Gastrocnemius medialis (tissue), 4 donors: ENCODE measurements at regions of chr18 and their contacts with region 1.

Region 1: GRCh38 chr18:34639687-34640086 is 70.4 kb upstream of the DTNA start:
- DNase-seq: peak in 1 of 2 donors; percentile 31
- ATAC-seq: peak; percentile 74 to 75
- H3K4me3 ChIP-seq: no peak overlapping the region
- H3K27ac ChIP-seq: peak overlapping the region; percentile 57 to 86 (median 72)
- H3K4me1 ChIP-seq: peaks cover 35 to 43% of the 10 kb centered on the region in 2 donors
- H3K27me3 ChIP-seq: no peaks in the 10 kb centered on the region
- CTCF ChIP-seq: no peak
- POLR2A ChIP-seq: no peak

Region 2: DNA sequence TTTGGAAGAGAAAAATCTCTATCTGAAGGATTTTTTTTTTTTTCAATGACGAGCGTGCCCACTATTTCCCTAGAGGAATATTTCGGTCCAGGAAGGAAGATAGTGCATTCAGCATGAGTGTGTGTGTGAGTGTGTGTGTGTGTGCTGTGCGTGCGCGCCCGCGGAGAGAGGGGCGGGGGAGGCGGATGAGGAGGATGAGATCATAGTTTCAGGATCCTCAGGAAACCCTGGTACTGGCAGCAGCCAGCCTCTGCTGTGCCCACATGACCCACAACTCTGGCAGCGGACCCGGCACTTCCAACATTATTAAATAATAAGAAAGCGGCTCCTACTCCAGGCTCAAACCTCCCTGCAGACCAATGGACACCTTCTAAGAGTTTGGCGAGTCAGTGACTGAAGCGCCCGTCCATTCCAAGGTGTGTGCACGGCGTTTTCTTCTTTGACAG is 146.6 kb before region 1 on chr18:
- in situ Hi-C with region 1: no loop called
- intact Hi-C with region 1: loop called (anchors 5 kb)
- DNase-seq: peak; percentile 63 to 85
- ATAC-seq: peak; percentile 87 to 88
- H3K4me3 ChIP-seq: peak overlapping the region; percentile 69 to 79 (median 72)
- H3K27ac ChIP-seq: peak overlapping the region; percentile 82 to 94 (median 92)
- H3K4me1 ChIP-seq: peaks cover 19 to 20% of the 10 kb centered on the region in 2 donors
- H3K27me3 ChIP-seq: no peaks in the 10 kb centered on the region
- CTCF ChIP-seq: no peak
- POLR2A ChIP-seq: no peak

Region 3: GRCh38 chr18:34624551-34624950 is 15.1 kb before region 1 on chr18:
- in situ Hi-C with region 1: no loop called
- intact Hi-C with region 1: loop called (anchors 2 kb)
- DNase-seq: no peak
- ATAC-seq: no peak
- H3K4me3 ChIP-seq: no peak overlapping the region
- H3K27ac ChIP-seq: peak overlapping the region; percentile 10 to 70 (median 54)
- H3K4me1 ChIP-seq: peaks cover 19 to 36% of the 10 kb centered on the region in 2 donors
- H3K27me3 ChIP-seq: no peaks in the 10 kb centered on the region
- CTCF ChIP-seq: no peak
- POLR2A ChIP-seq: no peak

Region 4: GRCh38 chr18:34676816-34677574 is 37.3 kb after region 1 on chr18:
- in situ Hi-C with region 1: no loop called
- intact Hi-C with region 1: no loop called
- DNase-seq: no peak
- ATAC-seq: no peak
- H3K4me3 ChIP-seq: no peak overlapping the region
- H3K27ac ChIP-seq: peak overlapping the region in 1 of 4 donors; percentile 56
- H3K4me1 ChIP-seq: peaks cover 15 to 27% of the 10 kb centered on the region in 2 donors
- H3K27me3 ChIP-seq: no peaks in the 10 kb centered on the region
- CTCF ChIP-seq: no peak
- POLR2A ChIP-seq: no peak

Region 5: GRCh38 chr18:34773961-34774766 is 134.5 kb after region 1 on chr18:
- in situ Hi-C with region 1: no loop called
- intact Hi-C with region 1: no loop called
- DNase-seq: peak in 1 of 2 donors; percentile 40
- ATAC-seq: peak; percentile 29 to 37
- H3K4me3 ChIP-seq: no peak overlapping the region
- H3K27ac ChIP-seq: peak overlapping the region; percentile 67 to 77 (median 70)
- H3K4me1 ChIP-seq: peaks cover 28 to 33% of the 10 kb centered on the region in 2 donors
- H3K27me3 ChIP-seq: no peaks in the 10 kb centered on the region
- CTCF ChIP-seq: no peak
- POLR2A ChIP-seq: no peak